Caco-2 (cell line): ENCODE measurements at regions of chr13 and their contacts with region 1.

Region 1: DNA sequence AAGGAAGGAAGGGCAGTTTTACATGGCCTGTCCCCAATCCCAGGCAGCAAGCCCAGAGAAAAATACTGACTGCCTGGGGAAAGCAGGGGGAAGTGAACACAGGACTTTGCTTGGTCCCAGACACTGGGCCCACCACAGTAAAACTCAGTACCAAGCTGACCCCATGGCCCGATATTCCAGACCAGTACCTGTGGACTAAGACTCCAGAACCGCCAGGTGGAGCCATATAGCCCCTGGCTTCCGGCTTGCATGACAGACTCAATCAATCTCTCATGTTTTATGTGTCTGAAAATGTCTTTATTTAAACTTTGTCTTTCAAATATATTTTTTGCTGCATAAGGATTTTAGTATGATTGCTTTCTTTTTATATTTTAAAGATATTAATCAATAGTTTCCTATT is 767.9 kb upstream of the SLITRK6 start:
- DNase-seq: peak in 1 of 2 experiments; percentile 52
- H3K4me3 ChIP-seq: no peak overlapping the region
- H3K4me3 Mint-ChIP-seq: no peak overlapping the region
- H3K27ac Mint-ChIP-seq: no peak overlapping the region
- H3K4me1 ChIP-seq: no peaks in the 10 kb centered on the region
- H3K4me1 Mint-ChIP-seq: no peaks in the 10 kb centered on the region
- H3K27me3 ChIP-seq: no peaks in the 10 kb centered on the region
- H3K27me3 Mint-ChIP-seq: no peaks in the 10 kb centered on the region
- CTCF ChIP-seq: peak; percentile 71 to 72

Region 2: DNA sequence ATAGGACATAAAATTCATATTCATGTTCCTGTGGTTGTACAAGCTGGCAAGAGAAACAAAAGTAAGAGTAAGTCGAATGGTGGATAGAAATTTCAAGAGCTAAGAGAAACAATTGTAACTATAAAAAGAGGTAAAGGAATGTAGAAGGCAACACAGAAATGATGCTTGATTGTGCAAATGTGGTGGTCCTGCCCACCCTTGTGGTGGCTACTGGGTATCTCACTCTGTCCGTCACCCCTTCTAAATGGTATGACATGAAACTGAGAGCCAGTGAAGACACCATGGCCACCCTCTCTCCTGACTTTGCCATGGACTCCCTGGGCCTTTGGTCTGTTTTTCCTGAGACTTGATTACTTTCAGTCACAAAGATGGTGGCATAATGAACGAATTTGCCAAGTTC is 158.0 kb after region 1 on chr13:
- CTCF ChIA-PET with region 1: no interaction called
- POLR2A ChIA-PET with region 1: no interaction called
- intact Hi-C with region 1: loop called (anchors 1 kb)
- DNase-seq: no peak
- H3K4me3 ChIP-seq: no peak overlapping the region
- H3K4me3 Mint-ChIP-seq: no peak overlapping the region
- H3K27ac Mint-ChIP-seq: no peak overlapping the region
- H3K4me1 ChIP-seq: no peaks in the 10 kb centered on the region
- H3K4me1 Mint-ChIP-seq: no peaks in the 10 kb centered on the region
- H3K27me3 ChIP-seq: no peaks in the 10 kb centered on the region
- H3K27me3 Mint-ChIP-seq: no peaks in the 10 kb centered on the region
- CTCF ChIP-seq: peak in 1 of 2 experiments; percentile 21

Region 3: GRCh38 chr13:86741762-86742285 is 174.7 kb after region 1 on chr13:
- CTCF ChIA-PET with region 1: no interaction called
- POLR2A ChIA-PET with region 1: no interaction called
- intact Hi-C with region 1: loop called (anchors 2 kb)
- DNase-seq: no peak
- H3K4me3 ChIP-seq: no peak overlapping the region
- H3K4me3 Mint-ChIP-seq: no peak overlapping the region
- H3K27ac Mint-ChIP-seq: no peak overlapping the region
- H3K4me1 ChIP-seq: no peaks in the 10 kb centered on the region
- H3K4me1 Mint-ChIP-seq: no peaks in the 10 kb centered on the region
- H3K27me3 ChIP-seq: no peaks in the 10 kb centered on the region
- H3K27me3 Mint-ChIP-seq: no peaks in the 10 kb centered on the region
- CTCF ChIP-seq: peak in 1 of 2 experiments; percentile 9